ENCODE measurements at regions of chr3 and their contacts with region 1.

Region 1: DNA sequence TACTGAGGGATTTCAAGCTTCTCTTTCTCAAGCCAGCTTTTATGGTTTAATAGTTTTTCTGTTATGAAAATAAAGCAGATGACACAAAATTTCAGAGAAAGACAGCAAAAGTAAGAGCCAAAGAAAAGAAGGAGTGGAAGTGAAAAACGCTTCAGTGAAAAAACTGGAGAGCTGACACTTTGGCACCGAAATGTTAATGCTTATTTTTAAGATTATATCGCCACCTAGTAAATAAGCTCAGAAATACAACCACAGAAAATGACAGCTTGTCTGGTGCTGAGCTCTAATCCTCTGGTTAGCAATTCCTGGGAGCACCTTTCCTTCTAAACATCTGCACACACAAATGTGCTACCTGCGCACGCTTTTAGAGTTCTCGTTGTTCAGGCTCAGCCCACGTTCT is 101.6 kb downstream of the ZPLD1 start:
- DNase-seq: no peak
- H3K4me3 ChIP-seq: no peak overlapping the region
- H3K27ac ChIP-seq: no peak overlapping the region
- H3K4me1 ChIP-seq: no peaks in the 10 kb centered on the region
- H3K27me3 ChIP-seq: no peaks in the 10 kb centered on the region
- CTCF ChIP-seq: peak; percentile 14 to 38 (median 36)
- EP300 ChIP-seq: no peak
- POLR2A ChIP-seq: no peak

Region 2: DNA sequence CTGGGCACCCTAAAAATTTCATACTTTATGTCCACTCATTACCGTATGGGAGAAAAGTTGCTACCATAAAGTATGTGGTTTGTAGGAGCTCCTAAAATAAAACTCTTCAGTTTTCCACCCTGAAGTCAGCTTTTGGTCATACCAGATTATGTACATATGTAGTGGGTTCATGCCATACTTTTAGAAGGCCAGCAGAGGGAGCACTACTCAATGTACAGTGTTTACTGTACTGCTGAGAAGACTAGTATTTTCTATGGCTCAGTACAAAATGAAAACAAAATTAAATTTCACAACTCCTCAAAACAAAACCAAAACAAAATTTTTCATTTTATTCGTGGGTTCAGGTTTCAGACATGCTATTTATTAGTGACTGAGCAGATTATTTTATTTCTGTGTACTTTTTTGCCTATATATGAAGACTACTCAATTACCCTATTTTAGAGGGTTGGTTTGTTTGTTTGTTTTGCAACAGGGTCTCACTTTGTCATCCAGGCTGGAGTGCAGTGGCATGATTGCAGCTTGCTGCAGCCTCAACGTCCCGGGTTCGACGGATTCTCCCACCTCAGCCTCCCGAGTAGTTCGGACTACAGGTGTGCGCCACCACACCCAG is 733.2 kb before region 1 on chr3:
- intact Hi-C with region 1: loop called (anchors 10 kb)
- DNase-seq: no peak
- H3K4me3 ChIP-seq: no peak overlapping the region
- H3K27ac ChIP-seq: peak overlapping the region in 1 of 4 donors; percentile 3
- H3K4me1 ChIP-seq: peaks cover 0 to 9% (median 0%) of the 10 kb centered on the region in 4 donors
- H3K27me3 ChIP-seq: no peaks in the 10 kb centered on the region
- CTCF ChIP-seq: peak; percentile 77 to 92 (median 81)
- EP300 ChIP-seq: no peak
- POLR2A ChIP-seq: no peak

Region 3: DNA sequence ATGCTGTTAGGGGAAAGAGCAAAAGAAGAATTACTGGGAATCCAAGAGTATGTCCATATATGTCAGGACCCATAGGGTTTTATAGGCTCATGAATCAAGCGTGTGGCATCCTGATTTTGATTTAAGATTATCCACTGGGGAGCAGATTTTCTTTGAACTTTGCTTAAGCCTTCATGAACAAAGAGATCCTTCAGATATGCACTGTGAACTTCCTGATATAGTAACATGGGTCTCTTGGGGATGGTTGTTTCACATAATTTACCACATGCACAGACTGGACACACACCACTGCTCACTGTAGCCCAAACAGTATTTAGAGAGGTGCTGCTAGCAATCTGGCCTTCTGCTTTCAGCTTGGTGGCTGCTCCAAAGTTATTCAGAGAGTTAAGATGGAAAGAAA is 302.6 kb before region 1 on chr3:
- intact Hi-C with region 1: loop called (anchors 5 kb)
- DNase-seq: no peak
- H3K4me3 ChIP-seq: no peak overlapping the region
- H3K27ac ChIP-seq: no peak overlapping the region
- H3K4me1 ChIP-seq: peaks cover 0 to 6% (median 4%) of the 10 kb centered on the region in 4 donors
- H3K27me3 ChIP-seq: no peaks in the 10 kb centered on the region
- CTCF ChIP-seq: no peak
- EP300 ChIP-seq: no peak
- POLR2A ChIP-seq: no peak

Measured in esophagus muscularis mucosa (tissue), 4 donors.